Tibial artery (tissue), 4 donors: ENCODE measurements at regions of chr3 and their contacts with region 1.

Region 1: DNA sequence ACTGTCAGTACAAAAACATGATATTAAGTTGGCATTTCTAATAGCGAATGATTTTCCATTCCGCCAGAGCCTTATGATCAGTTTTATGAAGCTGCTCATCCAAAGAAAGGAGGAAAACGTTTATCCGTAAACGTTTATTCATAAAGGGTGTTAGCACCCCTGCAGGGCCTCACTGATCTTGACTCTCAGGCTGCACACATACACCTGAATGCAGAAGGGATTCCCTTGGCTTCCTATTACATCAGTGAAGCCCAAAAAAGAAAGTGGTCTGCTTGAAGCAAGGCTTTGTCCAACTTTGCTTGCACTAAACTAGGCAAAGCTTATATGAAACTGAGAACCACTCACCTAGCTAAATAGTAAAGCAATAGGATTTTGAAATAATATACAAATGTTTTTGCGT is 659.5 kb upstream of the CADM2 start:
- DNase-seq: no peak
- H3K4me3 ChIP-seq: no peak overlapping the region
- H3K27ac ChIP-seq: no peak overlapping the region
- H3K4me1 ChIP-seq: no peaks in the 10 kb centered on the region
- H3K27me3 ChIP-seq: no peaks in the 10 kb centered on the region
- CTCF ChIP-seq: no peak

Region 2: GRCh38 chr3:83934312-83935150 is 364.8 kb before region 1 on chr3:
- intact Hi-C with region 1: no loop called
- DNase-seq: no peak
- H3K4me3 ChIP-seq: no peak overlapping the region
- H3K27ac ChIP-seq: no peak overlapping the region
- H3K4me1 ChIP-seq: peaks cover 0 to 4% (median 0%) of the 10 kb centered on the region in 4 donors
- H3K27me3 ChIP-seq: no peaks in the 10 kb centered on the region
- CTCF ChIP-seq: no peak

Region 3: GRCh38 chr3:85007195-85008094 is 708.1 kb after region 1 on chr3:
- intact Hi-C with region 1: loop called (anchors 5 kb)
- DNase-seq: no peak
- H3K4me3 ChIP-seq: no peak overlapping the region
- H3K27ac ChIP-seq: no peak overlapping the region
- H3K4me1 ChIP-seq: no peaks in the 10 kb centered on the region
- H3K27me3 ChIP-seq: no peaks in the 10 kb centered on the region
- CTCF ChIP-seq: no peak